Pancreas (tissue), 10 donors: ENCODE measurements at regions of chr17 and their contacts with region 1.

Region 1: DNA sequence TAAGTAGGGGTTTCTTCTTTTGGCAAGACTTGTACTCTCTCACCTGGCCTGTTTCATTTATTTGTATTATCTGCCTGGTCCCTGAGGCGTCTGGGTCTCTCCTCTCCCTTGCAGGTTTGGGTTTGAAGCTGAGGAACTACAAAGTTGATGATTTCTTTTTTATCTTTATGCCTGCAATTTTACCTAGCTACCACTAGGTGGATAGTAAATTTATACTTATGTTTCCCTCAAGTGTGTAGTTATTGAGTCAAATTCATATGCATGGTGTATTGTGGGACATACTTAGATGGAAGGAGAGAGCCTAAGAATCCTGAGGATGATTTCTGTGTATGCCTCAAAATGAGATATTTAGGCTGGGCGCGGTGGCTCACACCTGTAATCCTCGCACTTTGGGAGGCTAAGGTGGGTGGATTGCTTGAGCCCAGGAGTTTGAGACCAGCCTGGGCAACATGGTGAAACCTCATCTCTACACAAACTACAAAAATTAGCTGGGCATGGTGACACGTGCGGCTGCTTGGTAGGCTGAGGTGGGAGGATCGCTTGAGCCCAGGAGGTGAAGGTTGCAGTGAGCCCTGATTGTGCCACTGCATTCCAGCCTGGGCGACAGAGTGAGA is 13.6 kb downstream of the TMEM98 start:
- DNase-seq: no peak
- ATAC-seq: no peak
- H3K4me3 ChIP-seq: no peak overlapping the region
- H3K27ac ChIP-seq: no peak overlapping the region
- H3K4me1 ChIP-seq: peaks cover 7 to 21% (median 18%) of the 10 kb centered on the region in 3 donors
- H3K27me3 ChIP-seq: no peaks in the 10 kb centered on the region
- CTCF ChIP-seq: peak; percentile 24 to 41 (median 31)

Region 2: GRCh38 chr17:32997753-32998632 is 56.5 kb after region 1 on chr17:
- intact Hi-C with region 1: loop called in 1 of 3 experiments (anchors 10 kb)
- DNase-seq: peak; percentile 59 to 96 (median 83)
- ATAC-seq: peak; percentile 77 to 95 (median 88)
- H3K4me3 ChIP-seq: no peak overlapping the region
- H3K27ac ChIP-seq: no peak overlapping the region
- H3K4me1 ChIP-seq: peaks cover 0 to 3% (median 3%) of the 10 kb centered on the region in 3 donors
- H3K27me3 ChIP-seq: no peaks in the 10 kb centered on the region
- CTCF ChIP-seq: peak; percentile 85 to 91 (median 89)

Region 3: GRCh38 chr17:33021731-33022408 is 80.3 kb after region 1 on chr17:
- intact Hi-C with region 1: no loop called
- DNase-seq: no peak
- ATAC-seq: no peak
- H3K4me3 ChIP-seq: no peak overlapping the region
- H3K27ac ChIP-seq: no peak overlapping the region
- H3K4me1 ChIP-seq: no peaks in the 10 kb centered on the region
- H3K27me3 ChIP-seq: no peaks in the 10 kb centered on the region
- CTCF ChIP-seq: no peak